Activated CD8-positive, alpha-beta memory T cell treated with anti-CD3 and anti-CD28 coated beads, Interleukin-2, amount 10 ng/mL, durations not matched to agents 7 days and 5 days (primary cell): ENCODE measurements at regions of chr7 and their contacts with region 1.

Region 1: GRCh38 chr7:12686894-12687717 is at the start of gene ARL4A:
- DNase-seq: peak; percentile 95
- ATAC-seq: peak; percentile 76
- H3K4me3 Mint-ChIP-seq: peak within 1 kb of the TSS; percentile 96
- H3K27ac Mint-ChIP-seq: peak within 1 kb of the TSS; percentile 94
- H3K4me1 Mint-ChIP-seq: peaks cover 45% of the 10 kb centered on the region
- H3K27me3 Mint-ChIP-seq: no peaks in the 10 kb centered on the region
- total RNA-seq, gene ARL4A: 14.5 to 16.0 TPM

Region 2: GRCh38 chr7:12635841-12636240 is 51.3 kb before region 1 on chr7:
- CTCF ChIA-PET with region 1: interaction called, 10 read pairs
- DNase-seq: no peak
- ATAC-seq: peak; percentile 64
- H3K4me3 Mint-ChIP-seq: peak overlapping the region; percentile 51
- H3K27ac Mint-ChIP-seq: peak overlapping the region; percentile 40
- H3K4me1 Mint-ChIP-seq: peaks cover 15% of the 10 kb centered on the region
- H3K27me3 Mint-ChIP-seq: peaks cover 12% of the 10 kb centered on the region

Region 3: DNA sequence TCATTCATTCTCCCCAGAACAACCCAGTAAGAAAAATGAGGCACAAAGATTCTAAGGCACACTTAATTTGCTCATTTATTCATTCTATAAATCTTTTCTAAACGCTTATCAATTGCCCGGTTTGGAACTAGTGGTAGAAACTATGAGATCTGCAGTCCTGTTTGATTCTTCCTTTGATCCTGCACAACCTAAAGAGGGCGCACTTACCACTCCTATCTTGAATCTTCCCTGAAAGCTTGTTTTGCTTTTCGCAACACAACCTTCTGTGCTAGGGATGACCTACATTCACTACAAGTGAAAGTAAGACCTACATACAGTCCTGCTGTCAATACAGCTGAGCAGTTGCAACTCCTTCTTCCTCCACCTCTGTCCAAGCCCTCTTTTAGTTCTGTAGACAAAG is 12.3 kb before region 1 on chr7:
- CTCF ChIA-PET with region 1: interaction called, 13 read pairs
- DNase-seq: peak; percentile 53
- ATAC-seq: peak; percentile 76
- H3K4me3 Mint-ChIP-seq: no peak overlapping the region
- H3K27ac Mint-ChIP-seq: no peak overlapping the region
- H3K4me1 Mint-ChIP-seq: peaks cover 6% of the 10 kb centered on the region
- H3K27me3 Mint-ChIP-seq: no peaks in the 10 kb centered on the region

Region 4: GRCh38 chr7:12701433-12701832 is 14.3 kb after region 1 on chr7:
- CTCF ChIA-PET with region 1: interaction called, 13 read pairs
- DNase-seq: no peak
- ATAC-seq: no peak
- H3K4me3 Mint-ChIP-seq: no peak overlapping the region
- H3K27ac Mint-ChIP-seq: no peak overlapping the region
- H3K4me1 Mint-ChIP-seq: no peaks in the 10 kb centered on the region
- H3K27me3 Mint-ChIP-seq: no peaks in the 10 kb centered on the region

Region 5: DNA sequence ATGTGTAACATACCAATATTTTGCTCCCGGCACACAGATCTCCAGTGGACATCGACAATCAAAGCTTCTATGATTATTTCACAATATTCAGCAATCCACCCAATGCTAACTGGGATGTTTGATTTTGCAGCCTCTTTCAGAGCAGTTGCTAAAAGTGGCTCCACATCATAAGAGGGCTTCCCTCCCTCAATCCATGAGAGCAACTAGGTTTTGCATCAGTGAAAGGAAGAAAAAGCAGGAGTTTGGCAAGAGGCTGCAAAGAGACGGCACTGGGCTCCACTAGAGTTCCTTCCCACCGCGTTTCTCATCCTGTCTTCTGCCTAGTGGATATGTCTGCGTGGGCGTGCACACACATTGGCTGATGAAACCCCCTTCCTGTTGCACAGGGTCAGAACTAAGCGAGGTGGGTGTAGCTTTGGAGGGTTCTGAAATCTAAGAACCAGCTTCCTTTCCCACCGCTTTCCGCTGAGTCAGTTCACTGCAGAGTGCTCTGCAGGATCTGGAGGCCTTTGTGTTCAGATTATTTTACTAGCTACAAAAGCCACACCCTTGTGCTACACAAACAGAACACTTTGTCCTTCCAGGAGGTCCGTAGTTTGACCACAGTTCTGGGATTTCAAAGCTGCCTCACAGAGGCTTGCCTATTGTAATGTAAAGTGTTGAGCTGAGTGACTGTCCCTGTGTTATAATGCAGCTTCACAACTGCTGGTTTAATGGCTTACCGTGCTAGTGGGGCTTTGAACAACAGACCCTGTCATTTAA is 28.4 kb after region 1 on chr7:
- CTCF ChIA-PET with region 1: interaction called, 24 read pairs
- DNase-seq: peak; percentile 79
- ATAC-seq: peak; percentile 97
- H3K4me3 Mint-ChIP-seq: peak overlapping the region; percentile 38
- H3K27ac Mint-ChIP-seq: peak overlapping the region; percentile 77
- H3K4me1 Mint-ChIP-seq: peaks cover 41% of the 10 kb centered on the region
- H3K27me3 Mint-ChIP-seq: no peaks in the 10 kb centered on the region

Region 6: DNA sequence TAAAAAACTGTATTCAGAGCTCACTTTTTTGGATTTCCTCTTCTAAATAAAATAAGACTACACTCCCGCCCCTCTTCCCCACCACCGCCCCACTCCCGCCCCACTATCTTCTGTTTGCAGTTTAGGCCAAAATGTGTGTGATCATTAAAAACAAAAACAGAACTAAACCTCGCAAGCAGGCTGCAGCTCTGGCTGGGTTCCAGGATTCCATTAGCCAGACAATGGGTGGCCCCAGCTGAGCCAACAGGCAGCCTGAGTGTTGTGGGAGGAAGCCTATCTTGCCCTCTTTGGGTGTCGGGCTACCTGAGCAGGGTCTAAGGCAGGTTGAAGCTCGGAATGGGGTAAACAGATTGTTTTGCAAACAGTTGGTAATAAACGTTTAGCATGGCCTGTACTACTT is 42.0 kb after region 1 on chr7:
- CTCF ChIA-PET with region 1: interaction called, 20 read pairs
- DNase-seq: no peak
- ATAC-seq: no peak
- H3K4me3 Mint-ChIP-seq: no peak overlapping the region
- H3K27ac Mint-ChIP-seq: no peak overlapping the region
- H3K4me1 Mint-ChIP-seq: peaks cover 20% of the 10 kb centered on the region
- H3K27me3 Mint-ChIP-seq: no peaks in the 10 kb centered on the region

Region 7: DNA sequence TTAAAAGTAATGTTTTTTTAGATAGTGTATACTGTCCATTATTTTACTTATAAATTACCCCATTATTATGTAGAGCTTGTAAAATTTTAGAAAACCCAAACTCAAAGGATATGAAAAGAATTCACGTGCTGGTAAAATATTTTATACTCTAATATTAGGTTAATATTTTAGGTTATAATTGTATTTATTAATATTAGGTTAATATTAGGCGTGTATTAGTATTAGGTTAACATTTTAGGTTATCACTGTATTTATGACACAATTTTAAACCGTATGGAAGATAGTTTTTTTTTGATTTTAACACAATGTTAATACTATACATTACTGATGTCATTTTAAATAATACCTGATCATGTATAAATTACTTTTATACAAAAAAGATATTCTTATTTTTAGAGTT is 48.8 kb after region 1 on chr7:
- CTCF ChIA-PET with region 1: interaction called, 20 read pairs
- DNase-seq: no peak
- ATAC-seq: no peak
- H3K4me3 Mint-ChIP-seq: no peak overlapping the region
- H3K27ac Mint-ChIP-seq: no peak overlapping the region
- H3K4me1 Mint-ChIP-seq: peaks cover 12% of the 10 kb centered on the region
- H3K27me3 Mint-ChIP-seq: no peaks in the 10 kb centered on the region